Activated CD8-positive, alpha-beta T cell treated with anti-CD3 and anti-CD28 coated beads for 36 hours (primary cell): ENCODE measurements at regions of chr15 and their contacts with region 1.

Region 1: DNA sequence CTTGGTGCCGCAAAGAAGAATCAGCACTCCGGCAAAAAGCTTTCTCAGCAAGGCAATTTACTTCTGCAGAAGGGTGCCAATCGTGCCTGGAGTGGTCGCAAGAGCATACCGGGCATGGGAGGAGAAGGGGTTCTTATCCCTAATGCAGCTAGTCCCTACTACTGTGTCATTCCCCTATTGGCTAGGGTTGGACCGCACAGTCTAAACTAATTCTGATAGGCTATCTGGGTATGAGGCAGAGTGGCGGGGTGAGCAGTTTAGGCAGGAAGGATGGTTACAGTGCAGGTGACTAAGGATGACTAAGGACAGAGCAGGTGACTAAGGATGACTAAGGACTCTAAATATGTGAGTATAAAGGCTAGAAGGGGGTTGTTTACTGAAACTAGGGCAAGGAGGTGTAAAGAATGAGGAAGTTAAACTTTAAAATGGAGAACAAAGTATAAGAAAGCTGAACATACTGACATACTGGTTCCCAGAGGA is 52.9 kb downstream of the PGBD4 start:
- DNase-seq: peak; percentile 17
- ATAC-seq: peak; percentile 42
- H3K4me3 Mint-ChIP-seq: no peak overlapping the region
- H3K27ac Mint-ChIP-seq: no peak overlapping the region
- H3K4me1 Mint-ChIP-seq: no peaks in the 10 kb centered on the region
- H3K27me3 Mint-ChIP-seq: no peaks in the 10 kb centered on the region
- CTCF ChIP-seq: no peak

Region 2: GRCh38 chr15:34203936-34204335 is 49.2 kb after region 1 on chr15:
- CTCF ChIA-PET with region 1: interaction called, 13 read pairs
- POLR2A ChIA-PET with region 1: no interaction called
- intact Hi-C with region 1: loop called (anchors 5 kb)
- DNase-seq: no peak
- ATAC-seq: no peak
- H3K4me3 Mint-ChIP-seq: no peak overlapping the region
- H3K27ac Mint-ChIP-seq: no peak overlapping the region
- H3K4me1 Mint-ChIP-seq: peaks cover 40% of the 10 kb centered on the region
- H3K27me3 Mint-ChIP-seq: no peaks in the 10 kb centered on the region
- CTCF ChIP-seq: no peak